Activated CD8-positive, alpha-beta T cell treated with anti-CD3 and anti-CD28 coated beads for 36 hours (primary cell): ENCODE measurements at regions of chr13 and their contacts with region 1.

Region 1: DNA sequence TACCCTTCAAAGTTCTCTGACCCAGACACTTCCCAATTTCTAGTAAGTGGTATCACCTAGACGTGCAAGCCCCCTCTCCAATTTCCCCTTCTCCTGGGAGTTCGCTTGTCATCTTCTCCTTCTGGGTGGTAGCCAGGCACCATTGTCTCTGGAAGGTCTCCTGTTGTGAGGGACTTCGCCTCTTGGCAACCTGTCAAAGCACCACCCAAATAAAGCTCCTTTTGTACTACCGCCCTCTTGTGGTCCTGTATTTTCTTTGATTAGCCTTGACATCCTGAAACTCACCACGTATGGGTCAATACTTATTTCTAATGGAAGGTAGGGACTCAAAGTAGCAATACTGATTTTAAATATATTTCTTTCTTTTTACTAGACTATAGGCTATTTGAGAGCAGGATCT is 8.2 kb downstream of the GPC5 start:
- DNase-seq: peak; percentile 53
- ATAC-seq: peak; percentile 65
- H3K4me3 Mint-ChIP-seq: no peak overlapping the region
- H3K27ac Mint-ChIP-seq: no peak overlapping the region
- H3K4me1 Mint-ChIP-seq: no peaks in the 10 kb centered on the region
- H3K27me3 Mint-ChIP-seq: peaks cover 18% of the 10 kb centered on the region
- CTCF ChIP-seq: peak; percentile 64

Region 2: DNA sequence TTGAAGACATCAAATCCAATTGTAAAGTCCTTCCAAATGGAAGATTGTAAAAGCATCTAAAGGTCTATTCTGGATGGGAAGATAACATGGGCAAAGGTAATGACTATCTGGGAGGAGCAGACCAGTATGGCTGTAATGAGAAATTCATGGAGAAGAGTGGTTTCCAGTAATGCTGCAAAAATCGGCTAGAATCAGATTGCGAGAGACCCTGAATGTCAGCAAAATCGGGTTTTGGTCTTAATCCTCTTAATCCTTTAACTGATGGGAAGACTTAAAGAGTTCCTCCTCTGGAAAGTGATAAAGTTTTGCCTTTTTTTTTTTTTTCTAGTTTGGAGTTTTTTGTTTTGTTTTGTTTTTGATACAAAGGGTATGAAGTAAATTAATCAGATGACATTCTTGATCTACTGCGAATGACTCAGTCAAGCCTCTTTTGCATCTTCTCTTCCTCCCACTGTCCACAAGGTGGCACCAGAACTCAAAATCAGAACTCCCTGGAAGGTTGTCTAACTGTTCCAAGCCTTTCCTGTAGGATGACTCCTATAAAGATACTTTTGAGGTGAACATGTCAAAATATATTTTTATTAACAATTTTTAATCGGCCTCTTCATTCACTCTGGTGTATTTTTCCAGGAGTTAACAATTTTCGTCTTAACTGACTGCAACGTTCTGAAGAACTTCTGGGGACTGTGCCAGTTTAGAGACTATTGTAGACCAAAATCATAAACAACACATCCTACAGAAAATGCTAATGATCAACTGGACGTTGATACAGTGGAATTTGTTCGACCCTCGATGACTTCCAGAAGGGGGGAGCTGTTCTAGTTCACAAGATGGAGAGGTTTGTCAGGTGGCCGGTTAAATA is 272.4 kb before region 1 on chr13:
- CTCF ChIA-PET with region 1: interaction called, 5 read pairs
- POLR2A ChIA-PET with region 1: no interaction called
- intact Hi-C with region 1: loop called (anchors 10 kb)
- DNase-seq: peak; percentile 43
- ATAC-seq: peak; percentile 74
- H3K4me3 Mint-ChIP-seq: no peak overlapping the region
- H3K27ac Mint-ChIP-seq: no peak overlapping the region
- H3K4me1 Mint-ChIP-seq: no peaks in the 10 kb centered on the region
- H3K27me3 Mint-ChIP-seq: no peaks in the 10 kb centered on the region
- CTCF ChIP-seq: peak; percentile 76

Region 3: DNA sequence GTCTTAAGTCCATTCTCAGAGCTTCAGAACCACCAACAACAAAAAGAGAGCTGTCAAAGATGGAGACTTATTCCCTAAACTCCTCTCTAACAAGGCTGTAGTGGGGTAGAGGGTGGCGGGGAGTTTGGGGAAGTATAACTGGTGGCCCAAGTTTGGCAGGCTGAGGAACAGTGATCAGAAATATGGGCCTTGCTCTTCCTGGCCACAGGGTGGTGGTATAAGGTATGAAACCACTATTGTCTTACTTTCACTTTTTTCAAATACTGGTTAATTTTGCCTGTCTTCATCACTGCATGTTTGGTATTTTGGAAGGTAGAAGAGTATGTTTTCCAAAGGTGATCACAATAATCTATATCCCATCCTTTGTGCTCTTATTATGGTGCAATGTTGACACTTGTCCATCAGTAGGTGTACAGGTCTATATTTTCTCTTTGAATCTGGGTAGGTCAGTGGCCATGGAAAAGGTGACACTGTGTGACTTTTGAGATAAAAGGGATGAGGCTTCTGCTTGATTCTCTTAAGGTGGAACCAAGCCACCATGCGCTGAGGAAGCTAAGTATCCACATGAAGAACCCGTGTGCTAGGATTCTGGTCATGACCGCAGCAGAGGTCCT is 31.4 kb before region 1 on chr13:
- CTCF ChIA-PET with region 1: interaction called, 17 read pairs
- POLR2A ChIA-PET with region 1: no interaction called
- intact Hi-C with region 1: no loop called
- DNase-seq: no peak
- ATAC-seq: peak; percentile 87
- H3K4me3 Mint-ChIP-seq: no peak overlapping the region
- H3K27ac Mint-ChIP-seq: no peak overlapping the region
- H3K4me1 Mint-ChIP-seq: peaks cover 6% of the 10 kb centered on the region
- H3K27me3 Mint-ChIP-seq: no peaks in the 10 kb centered on the region
- CTCF ChIP-seq: peak; percentile 60

Region 4: GRCh38 chr13:91491984-91492383 is 85.4 kb after region 1 on chr13:
- CTCF ChIA-PET with region 1: no interaction called
- POLR2A ChIA-PET with region 1: no interaction called
- intact Hi-C with region 1: no loop called
- DNase-seq: no peak
- ATAC-seq: no peak
- H3K4me3 Mint-ChIP-seq: no peak overlapping the region
- H3K27ac Mint-ChIP-seq: no peak overlapping the region
- H3K4me1 Mint-ChIP-seq: no peaks in the 10 kb centered on the region
- H3K27me3 Mint-ChIP-seq: peaks cover 6% of the 10 kb centered on the region
- CTCF ChIP-seq: no peak